ENCODE measurements at regions of chr1 and their contacts with region 1.

Region 1: DNA sequence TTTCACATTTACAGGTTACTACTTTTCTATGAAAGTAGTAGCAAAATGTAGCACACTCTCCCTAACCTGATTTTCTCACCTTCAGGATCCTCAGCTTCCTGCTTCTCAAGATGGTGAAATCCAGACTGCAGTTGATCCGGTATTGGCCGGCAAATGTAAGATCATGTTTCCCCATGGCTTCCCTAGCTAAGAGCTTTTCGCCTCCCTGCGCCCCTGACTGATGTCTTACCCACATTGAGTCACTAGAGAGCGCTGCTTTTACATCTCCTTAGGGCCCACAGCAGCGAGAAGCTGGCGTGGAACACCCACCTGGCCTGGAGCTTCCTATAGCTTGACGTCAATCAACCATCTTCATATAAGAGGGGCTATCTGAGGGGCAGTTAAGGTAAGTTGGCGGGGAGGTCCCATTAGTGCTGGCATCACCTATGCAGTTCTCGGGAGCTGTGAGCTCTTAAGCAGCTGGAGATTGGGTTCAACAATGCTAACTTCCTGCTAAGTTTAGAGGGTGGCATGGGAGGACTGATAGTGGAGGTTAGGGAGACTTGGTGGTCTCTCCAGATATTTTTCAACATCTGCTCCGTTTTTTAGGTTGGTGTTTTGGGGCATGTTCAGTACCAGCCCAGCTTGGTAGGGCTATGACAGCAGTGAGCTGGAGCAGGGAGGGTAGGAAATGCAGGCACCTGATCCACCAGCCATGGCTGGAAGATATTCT is 5.5 kb downstream of the PTPN7 start:
- DNase-seq: no peak
- ATAC-seq: peak; percentile 73
- H3K4me3 Mint-ChIP-seq: no peak overlapping the region
- H3K27ac Mint-ChIP-seq: no peak overlapping the region
- H3K4me1 Mint-ChIP-seq: peaks cover 37% of the 10 kb centered on the region
- H3K27me3 Mint-ChIP-seq: no peaks in the 10 kb centered on the region
- CTCF ChIP-seq: no peak

Region 2: GRCh38 chr1:201990427-201990826 is 164.5 kb before region 1 on chr1:
- CTCF ChIA-PET with region 1: no interaction called
- POLR2A ChIA-PET with region 1: no interaction called
- intact Hi-C with region 1: no loop called
- DNase-seq: no peak
- ATAC-seq: no peak
- H3K4me3 Mint-ChIP-seq: no peak overlapping the region
- H3K27ac Mint-ChIP-seq: no peak overlapping the region
- H3K4me1 Mint-ChIP-seq: no peaks in the 10 kb centered on the region
- H3K27me3 Mint-ChIP-seq: no peaks in the 10 kb centered on the region
- CTCF ChIP-seq: no peak

Region 3: GRCh38 chr1:202192770-202193613 is 38.1 kb after region 1 on chr1:
- CTCF ChIA-PET with region 1: interaction called, 13 read pairs
- POLR2A ChIA-PET with region 1: no interaction called
- intact Hi-C with region 1: no loop called
- DNase-seq: peak; percentile 57
- ATAC-seq: peak; percentile 70
- H3K4me3 Mint-ChIP-seq: peak overlapping the region; percentile 64
- H3K27ac Mint-ChIP-seq: no peak overlapping the region
- H3K4me1 Mint-ChIP-seq: peaks cover 18% of the 10 kb centered on the region
- H3K27me3 Mint-ChIP-seq: peaks cover 30% of the 10 kb centered on the region
- CTCF ChIP-seq: no peak